Esophagus muscularis mucosa (tissue), 4 donors: ENCODE measurements at regions of chr4 and their contacts with region 1.

Region 1: DNA sequence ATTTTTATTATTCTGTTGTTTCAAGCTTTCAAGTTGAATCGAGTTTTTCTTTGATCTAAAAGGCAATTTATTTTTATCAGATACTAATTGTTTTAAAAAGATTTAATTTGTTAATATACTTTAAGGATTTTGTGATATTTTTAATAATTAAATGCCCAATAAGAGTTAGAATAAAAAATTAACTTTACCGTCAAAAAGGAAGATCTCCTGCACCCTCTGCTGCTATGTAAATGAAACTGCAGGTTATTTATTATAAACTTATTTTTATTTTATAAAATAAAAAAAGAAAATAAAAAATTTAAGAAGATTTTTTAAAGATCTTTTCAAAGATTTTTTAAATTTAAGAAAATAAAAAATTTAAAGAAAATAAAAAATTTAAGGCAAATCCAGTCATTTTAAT is 166.1 kb downstream of the CCSER1 start:
- DNase-seq: no peak
- H3K4me3 ChIP-seq: no peak overlapping the region
- H3K27ac ChIP-seq: no peak overlapping the region
- H3K4me1 ChIP-seq: no peaks in the 10 kb centered on the region
- H3K27me3 ChIP-seq: no peaks in the 10 kb centered on the region
- CTCF ChIP-seq: peak in 2 of 3 experiments; percentile 38
- EP300 ChIP-seq: no peak
- POLR2A ChIP-seq: no peak

Region 2: GRCh38 chr4:90025248-90025647 is 268.1 kb before region 1 on chr4:
- intact Hi-C with region 1: no loop called
- DNase-seq: no peak
- H3K4me3 ChIP-seq: no peak overlapping the region
- H3K27ac ChIP-seq: no peak overlapping the region
- H3K4me1 ChIP-seq: no peaks in the 10 kb centered on the region
- H3K27me3 ChIP-seq: no peaks in the 10 kb centered on the region
- CTCF ChIP-seq: no peak
- EP300 ChIP-seq: no peak
- POLR2A ChIP-seq: no peak

Region 3: GRCh38 chr4:90127223-90127705 is 166.1 kb before region 1 on chr4 and contains the start of gene CCSER1:
- intact Hi-C with region 1: loop called (anchors 10 kb)
- DNase-seq: peak; percentile 95
- H3K4me3 ChIP-seq: peak within 1 kb of the TSS; percentile 67 to 77 (median 73)
- H3K27ac ChIP-seq: peak within 1 kb of the TSS; percentile 69 to 85 (median 78)
- H3K4me1 ChIP-seq: peaks cover 0 to 27% (median 25%) of the 10 kb centered on the region in 4 donors
- H3K27me3 ChIP-seq: no peaks in the 10 kb centered on the region
- CTCF ChIP-seq: no peak
- EP300 ChIP-seq: no peak
- POLR2A ChIP-seq: peak; percentile 38
- total RNA-seq, gene CCSER1: 3.6 to 7.0 (median 5.5) TPM